ENCODE measurements at regions of chr1 and their contacts with region 1.

Region 1: DNA sequence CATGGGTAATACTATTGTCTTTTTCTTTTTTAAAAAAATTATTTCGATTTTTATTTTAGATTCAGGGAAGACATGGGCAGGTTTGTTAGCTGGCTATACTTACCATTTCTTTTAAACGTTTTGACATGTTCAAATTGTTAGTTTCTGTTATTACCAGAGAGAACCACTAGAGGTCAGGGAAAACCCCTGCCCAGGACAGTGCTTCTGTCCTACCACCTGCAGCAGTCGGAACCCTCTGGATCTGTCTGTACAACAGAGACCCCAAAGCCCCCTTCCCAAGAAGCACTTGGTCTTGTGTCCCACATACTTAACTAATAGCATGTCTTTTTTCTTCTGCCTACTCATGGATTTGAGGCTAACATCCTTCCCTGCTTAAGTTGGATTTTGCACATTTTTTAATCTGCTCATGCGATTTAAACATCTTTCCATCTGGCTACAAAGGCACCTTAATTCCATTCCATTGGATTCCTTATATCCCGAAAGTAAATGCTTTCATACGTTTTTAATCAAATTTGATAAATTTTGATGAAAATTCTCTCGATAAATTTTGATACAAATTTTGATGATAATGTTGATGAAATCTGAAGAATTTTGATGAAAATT is 10.0 kb upstream of the C1orf115 start:
- DNase-seq: no peak
- ATAC-seq: peak in 3 of 4 donors; percentile 66 to 78 (median 74)
- H3K4me3 ChIP-seq: no peak overlapping the region
- H3K27ac ChIP-seq: no peak overlapping the region
- H3K4me1 ChIP-seq: peaks cover 0 to 3% (median 0%) of the 10 kb centered on the region in 12 donors
- H3K27me3 ChIP-seq: no peaks in the 10 kb centered on the region
- CTCF ChIP-seq: peak; percentile 68 to 83 (median 80)
- POLR2A ChIP-seq: no peak

Region 2: GRCh38 chr1:220733090-220733601 is 53.0 kb after region 1 on chr1:
- intact Hi-C with region 1: loop called in 4 of 10 experiments (anchors 1 to 2 kb)
- DNase-seq: peak; percentile 73 to 86 (median 82)
- ATAC-seq: peak; percentile 92 to 96 (median 96)
- H3K4me3 ChIP-seq: peak overlapping the region in 10 of 12 donors; percentile 10 to 50 (median 38)
- H3K27ac ChIP-seq: peak overlapping the region; percentile 54 to 89 (median 79)
- H3K4me1 ChIP-seq: peaks cover 0 to 21% (median 5%) of the 10 kb centered on the region in 12 donors
- H3K27me3 ChIP-seq: no peaks in the 10 kb centered on the region
- CTCF ChIP-seq: peak; percentile 68 to 95 (median 88)
- POLR2A ChIP-seq: no peak

Region 3: DNA sequence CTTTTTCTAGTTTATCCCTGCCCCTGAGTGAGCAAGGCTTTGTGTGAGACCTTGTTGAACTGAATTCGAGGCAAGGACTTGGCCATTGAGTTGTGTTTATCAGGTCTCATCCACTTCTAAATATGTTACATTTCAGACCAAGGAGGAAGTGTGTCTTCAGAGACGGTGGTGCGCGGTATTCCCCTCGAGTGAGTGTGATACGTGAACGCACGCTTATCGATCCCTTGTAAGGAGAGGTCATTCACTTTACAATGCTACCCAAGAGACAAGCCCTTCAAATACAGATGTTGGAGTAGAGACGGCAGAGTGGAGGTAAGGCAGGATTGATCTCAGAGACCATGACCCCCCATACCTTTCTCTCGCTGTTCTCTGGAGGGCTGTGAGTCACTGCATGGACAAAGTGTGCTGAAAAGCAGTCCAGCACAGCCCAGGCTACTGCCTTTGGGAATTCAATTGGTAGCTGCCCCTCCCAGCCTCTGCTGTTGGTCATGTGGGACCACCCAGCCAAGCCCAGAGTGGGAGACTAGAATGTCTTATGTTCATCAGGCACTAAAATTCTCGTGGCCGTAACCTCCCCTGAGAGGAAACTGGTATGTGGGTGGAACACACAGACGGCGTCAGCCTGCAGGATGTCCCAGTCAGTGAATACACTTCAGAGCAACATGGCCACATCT is 90.2 kb after region 1 on chr1:
- intact Hi-C with region 1: loop called in 4 of 10 experiments (anchors 1 to 5 kb)
- DNase-seq: peak in 1 of 5 donors; percentile 39
- ATAC-seq: peak in 3 of 4 donors; percentile 25 to 47 (median 36)
- H3K4me3 ChIP-seq: no peak overlapping the region
- H3K27ac ChIP-seq: peak overlapping the region in 2 of 12 donors; percentile 14 to 40
- H3K4me1 ChIP-seq: peaks cover 0 to 37% (median 17%) of the 10 kb centered on the region in 12 donors
- H3K27me3 ChIP-seq: no peaks in the 10 kb centered on the region
- CTCF ChIP-seq: no peak
- POLR2A ChIP-seq: no peak

Region 4: GRCh38 chr1:220784751-220785150 is 104.6 kb after region 1 on chr1:
- intact Hi-C with region 1: loop called in 3 of 10 experiments (anchors 5 kb)
- DNase-seq: no peak
- ATAC-seq: no peak
- H3K4me3 ChIP-seq: no peak overlapping the region
- H3K27ac ChIP-seq: no peak overlapping the region
- H3K4me1 ChIP-seq: peaks cover 0 to 28% (median 12%) of the 10 kb centered on the region in 12 donors
- H3K27me3 ChIP-seq: peaks cover 0 to 9% (median 0%) of the 10 kb centered on the region in 9 donors
- CTCF ChIP-seq: no peak
- POLR2A ChIP-seq: no peak